ENCODE measurements at regions of chrX and their contacts with region 1.

Region 1: DNA sequence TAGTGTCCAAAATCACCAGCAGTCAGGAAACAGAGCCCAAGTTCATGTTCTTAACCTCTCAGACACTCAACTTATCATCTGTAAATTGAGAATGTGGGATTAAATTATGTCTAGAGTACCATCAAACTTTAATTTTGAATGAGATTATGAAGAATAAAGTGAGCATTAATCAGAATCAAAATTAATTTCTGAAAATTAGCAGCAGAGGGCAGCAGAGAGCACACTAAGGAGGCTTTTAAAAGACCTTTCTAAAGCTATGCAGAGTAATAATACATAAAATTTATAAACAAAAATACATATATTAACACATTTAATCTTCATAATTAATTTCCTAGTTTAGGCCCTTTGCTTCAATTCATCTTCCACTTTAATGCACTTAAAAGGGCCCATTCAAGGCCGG is 7.1 kb downstream of the TASL start:
- DNase-seq: peak; percentile 26
- ATAC-seq: peak; percentile 62; the same call in 1 of the 2 replicates
- H3K4me3 ChIP-seq: no peak overlapping the region
- H3K27ac ChIP-seq: no peak overlapping the region
- H3K4me1 ChIP-seq: no peaks in the 10 kb centered on the region
- H3K27me3 ChIP-seq: no peaks in the 10 kb centered on the region
- CTCF ChIP-seq: peak; percentile 62
- POLR2A ChIP-seq: no peak
- RAD21 ChIP-seq: peak; percentile 48

Region 2: GRCh38 chrX:30652527-30653414 is 82.3 kb after region 1 on chrX:
- CTCF ChIA-PET with region 1: no interaction called
- POLR2A ChIA-PET with region 1: no interaction called
- dilution Hi-C with region 1: no loop called
- in situ Hi-C with region 1: no loop called
- intact Hi-C with region 1: loop called (anchors 10 kb)
- DNase-seq: peak; percentile 88
- ATAC-seq: peak; percentile 95
- H3K4me3 ChIP-seq: peak overlapping the region; percentile 62
- H3K27ac ChIP-seq: peak overlapping the region; percentile 47
- H3K4me1 ChIP-seq: no peaks in the 10 kb centered on the region; the same call in 1 of the 2 replicates
- H3K27me3 ChIP-seq: no peaks in the 10 kb centered on the region
- CTCF ChIP-seq: no peak
- POLR2A ChIP-seq: no peak; the same call in 1 of the 2 replicates
- RAD21 ChIP-seq: no peak

Region 3: GRCh38 chrX:30713061-30713525 is 142.6 kb after region 1 on chrX:
- CTCF ChIA-PET with region 1: interaction called, 4 read pairs
- POLR2A ChIA-PET with region 1: no interaction called
- dilution Hi-C with region 1: no loop called
- in situ Hi-C with region 1: loop called (anchors 5 kb)
- intact Hi-C with region 1: loop called (anchors 2 kb)
- DNase-seq: peak; percentile 65
- ATAC-seq: peak; percentile 44; the same call in 1 of the 2 replicates
- H3K4me3 ChIP-seq: no peak overlapping the region
- H3K27ac ChIP-seq: no peak overlapping the region
- H3K4me1 ChIP-seq: no peaks in the 10 kb centered on the region
- H3K27me3 ChIP-seq: no peaks in the 10 kb centered on the region
- CTCF ChIP-seq: peak; percentile 68
- POLR2A ChIP-seq: no peak
- RAD21 ChIP-seq: peak; percentile 81